ENCODE measurements at regions of chr5 and their contacts with region 1.

Region 1: DNA sequence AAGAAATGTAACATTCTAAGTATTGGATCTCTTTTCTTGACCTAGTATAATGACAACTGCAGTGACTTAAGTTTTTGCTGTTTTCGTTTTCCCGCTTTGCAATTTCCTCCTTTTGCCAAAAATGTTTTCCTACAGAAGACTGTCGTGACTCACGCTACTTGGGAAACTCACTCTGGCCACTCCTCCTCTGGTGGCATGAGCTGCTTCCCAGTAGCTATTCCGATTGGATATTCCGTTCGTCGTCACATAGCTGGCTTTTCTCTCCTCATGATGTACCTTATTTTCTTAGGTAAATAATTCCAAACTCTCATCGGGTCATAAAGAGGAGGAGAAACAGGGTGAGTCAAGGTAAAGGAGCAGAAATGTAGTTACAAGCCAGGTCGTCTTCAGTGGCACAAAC is 64.9 kb downstream of the GOLPH3 start:
- DNase-seq: no peak
- H3K4me3 ChIP-seq: no peak overlapping the region
- CTCF ChIP-seq: no peak

Region 2: GRCh38 chr5:32057162-32058096 is 51.8 kb before region 1 on chr5:
- in situ Hi-C with region 1: loop called (anchors 5 kb)
- DNase-seq: no peak
- H3K4me3 ChIP-seq: no peak overlapping the region
- CTCF ChIP-seq: no peak

Measured in astrocyte of the cerebellum (primary cell).